Activated CD8-positive, alpha-beta T cell treated with anti-CD3 and anti-CD28 coated beads for 36 hours (primary cell): ENCODE measurements at regions of chr12 and their contacts with region 1.

Region 1: DNA sequence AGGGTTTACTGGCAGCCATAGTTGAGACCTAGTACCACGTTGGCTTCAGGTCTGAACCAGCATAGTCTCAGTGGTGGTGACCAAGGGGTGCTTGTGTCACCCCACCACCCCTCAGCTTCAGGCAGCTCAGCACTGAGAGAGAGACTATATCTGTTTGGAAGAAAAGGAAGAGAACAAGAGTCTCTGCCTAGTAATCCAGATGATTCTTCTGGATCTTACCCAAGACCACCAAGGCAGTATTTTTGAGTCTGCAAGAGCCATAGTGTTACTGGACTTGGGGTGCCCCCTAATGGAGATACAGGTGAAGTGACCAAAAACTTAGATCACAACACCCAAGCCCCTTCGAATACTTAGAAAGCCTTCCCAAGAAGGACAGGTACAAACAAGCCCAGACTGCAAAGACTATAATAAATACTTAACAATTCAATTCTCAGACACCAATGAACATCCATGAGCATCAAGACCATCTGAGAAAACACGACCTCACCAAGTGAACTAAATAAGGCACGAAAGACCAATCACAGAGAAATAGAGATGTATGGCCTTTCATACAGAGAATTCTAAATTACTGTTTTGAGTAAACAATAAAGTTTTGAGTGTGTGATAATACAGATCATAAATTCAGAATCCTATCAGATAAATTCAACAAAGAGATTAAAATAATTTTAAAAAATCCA is 107.0 kb downstream of the HELB start:
- DNase-seq: peak; percentile 60
- ATAC-seq: peak; percentile 62
- H3K4me3 Mint-ChIP-seq: no peak overlapping the region
- H3K27ac Mint-ChIP-seq: no peak overlapping the region
- H3K4me1 Mint-ChIP-seq: no peaks in the 10 kb centered on the region
- H3K27me3 Mint-ChIP-seq: peaks cover 10% of the 10 kb centered on the region
- CTCF ChIP-seq: peak; percentile 84

Region 2: DNA sequence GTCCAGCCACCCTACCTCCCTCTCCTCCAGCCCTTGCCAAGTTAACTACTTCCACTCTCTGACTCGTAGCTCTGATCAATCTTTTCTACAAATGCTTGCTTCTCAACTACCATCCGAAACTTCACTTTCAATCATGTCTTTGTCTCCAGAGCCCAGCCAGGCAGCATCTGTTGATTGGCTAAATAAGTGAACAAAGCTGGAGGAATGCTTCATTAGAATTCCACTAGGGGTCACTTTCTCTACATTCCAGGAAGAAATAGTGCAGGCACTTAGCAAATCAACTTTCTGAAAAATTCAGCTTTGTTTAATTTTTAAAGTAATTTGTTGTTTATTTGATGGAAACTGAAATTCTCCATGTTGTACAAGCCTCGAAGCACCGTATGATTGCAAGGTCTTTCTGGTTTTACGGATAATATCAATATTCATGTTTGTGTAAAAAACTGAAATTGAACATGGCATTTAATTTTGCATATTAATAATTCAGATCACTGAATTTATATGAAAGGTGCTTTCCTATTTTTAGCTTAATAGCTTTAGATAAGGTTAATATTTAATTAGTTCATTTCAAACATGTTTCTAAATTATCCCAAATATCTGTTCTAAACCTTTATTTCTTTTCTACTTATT is 139.5 kb before region 1 on chr12:
- CTCF ChIA-PET with region 1: interaction called, 77 read pairs
- POLR2A ChIA-PET with region 1: no interaction called
- intact Hi-C with region 1: loop called (anchors 1 kb)
- DNase-seq: peak; percentile 29
- ATAC-seq: peak; percentile 65
- H3K4me3 Mint-ChIP-seq: no peak overlapping the region
- H3K27ac Mint-ChIP-seq: no peak overlapping the region
- H3K4me1 Mint-ChIP-seq: no peaks in the 10 kb centered on the region
- H3K27me3 Mint-ChIP-seq: peaks cover 3% of the 10 kb centered on the region
- CTCF ChIP-seq: peak; percentile 58

Region 3: DNA sequence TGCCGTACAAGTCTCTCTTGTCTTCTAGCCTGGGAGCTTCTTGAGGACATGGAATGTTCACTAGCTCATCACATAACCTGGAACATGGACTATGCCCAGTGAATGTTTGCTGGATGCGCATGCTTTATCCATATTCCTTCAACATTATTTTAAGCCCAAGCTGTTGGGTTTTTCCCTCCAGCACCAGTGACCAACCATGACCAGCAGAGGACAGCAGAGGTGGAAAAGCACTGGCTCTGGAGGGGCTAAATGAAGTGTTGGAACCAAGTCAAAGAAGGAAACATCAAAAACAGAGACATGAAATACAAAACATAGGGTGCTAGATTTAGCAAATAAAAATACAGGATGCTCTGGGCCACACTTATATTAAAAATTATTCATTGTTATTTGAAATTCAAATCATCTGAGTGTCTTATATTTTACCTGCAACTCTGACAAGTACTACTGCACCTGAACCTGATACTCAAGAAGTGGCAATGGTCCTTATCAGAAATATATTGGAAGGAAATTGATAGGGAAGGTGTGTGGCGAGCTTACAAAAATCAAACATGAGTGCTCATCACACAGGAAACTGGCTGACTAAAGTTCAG is 130.1 kb before region 1 on chr12:
- CTCF ChIA-PET with region 1: interaction called, 77 read pairs
- POLR2A ChIA-PET with region 1: no interaction called
- intact Hi-C with region 1: no loop called
- DNase-seq: peak; percentile 51
- ATAC-seq: peak; percentile 68
- H3K4me3 Mint-ChIP-seq: no peak overlapping the region
- H3K27ac Mint-ChIP-seq: no peak overlapping the region
- H3K4me1 Mint-ChIP-seq: peaks cover 29% of the 10 kb centered on the region
- H3K27me3 Mint-ChIP-seq: no peaks in the 10 kb centered on the region
- CTCF ChIP-seq: peak; percentile 57

Region 4: DNA sequence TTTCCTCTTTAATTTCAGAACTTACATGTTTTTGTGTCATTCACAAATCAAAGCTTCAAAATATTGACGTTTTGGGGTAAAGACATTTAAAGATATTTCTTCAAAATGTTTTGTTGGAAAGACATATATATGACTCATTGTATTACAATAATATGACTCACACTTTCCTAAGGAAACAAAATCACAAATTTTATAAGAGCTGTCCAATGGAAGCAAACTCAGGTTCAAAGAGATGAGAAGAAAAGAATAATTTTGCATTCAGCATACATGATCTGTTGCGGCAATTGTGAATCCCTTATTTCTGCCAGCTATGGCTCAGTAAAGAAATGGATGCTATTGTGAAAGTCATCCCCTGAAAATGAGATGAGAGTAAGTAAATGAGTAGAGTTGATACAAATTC is 186.9 kb after region 1 on chr12:
- CTCF ChIA-PET with region 1: no interaction called
- POLR2A ChIA-PET with region 1: no interaction called
- intact Hi-C with region 1: no loop called
- DNase-seq: no peak
- ATAC-seq: no peak
- H3K4me3 Mint-ChIP-seq: no peak overlapping the region
- H3K27ac Mint-ChIP-seq: no peak overlapping the region
- H3K4me1 Mint-ChIP-seq: no peaks in the 10 kb centered on the region
- H3K27me3 Mint-ChIP-seq: no peaks in the 10 kb centered on the region
- CTCF ChIP-seq: no peak